MCF 10A (cell line): ENCODE measurements at regions of chr3 and their contacts with region 1.

Region 1: DNA sequence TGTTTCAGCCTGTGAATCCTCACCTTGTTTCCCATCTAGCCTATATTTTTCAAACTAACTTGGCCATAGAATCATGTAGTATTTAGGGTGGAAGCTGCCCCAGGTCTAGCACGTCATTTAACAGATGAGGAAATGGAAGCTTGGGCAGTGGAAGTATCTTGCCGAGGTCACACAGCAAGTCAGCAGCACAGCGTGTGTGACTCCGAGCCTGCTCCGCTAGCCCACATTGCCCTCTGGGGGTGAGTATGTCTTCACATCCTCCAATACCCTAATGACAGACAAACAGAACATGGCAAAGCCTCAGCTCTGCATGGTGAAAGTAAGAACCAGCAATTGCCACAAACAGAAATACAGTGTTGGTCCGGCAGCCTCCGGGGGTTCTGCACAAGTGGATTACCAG is 2.2 kb upstream of the CCR5 start:
- DNase-seq: peak; percentile 57
- H3K4me3 Mint-ChIP-seq: no peak overlapping the region
- H3K27ac Mint-ChIP-seq: no peak overlapping the region
- H3K4me1 Mint-ChIP-seq: no peaks in the 10 kb centered on the region
- H3K27me3 Mint-ChIP-seq: peaks cover 11% of the 10 kb centered on the region
- CTCF ChIP-seq: peak; percentile 28

Region 2: DNA sequence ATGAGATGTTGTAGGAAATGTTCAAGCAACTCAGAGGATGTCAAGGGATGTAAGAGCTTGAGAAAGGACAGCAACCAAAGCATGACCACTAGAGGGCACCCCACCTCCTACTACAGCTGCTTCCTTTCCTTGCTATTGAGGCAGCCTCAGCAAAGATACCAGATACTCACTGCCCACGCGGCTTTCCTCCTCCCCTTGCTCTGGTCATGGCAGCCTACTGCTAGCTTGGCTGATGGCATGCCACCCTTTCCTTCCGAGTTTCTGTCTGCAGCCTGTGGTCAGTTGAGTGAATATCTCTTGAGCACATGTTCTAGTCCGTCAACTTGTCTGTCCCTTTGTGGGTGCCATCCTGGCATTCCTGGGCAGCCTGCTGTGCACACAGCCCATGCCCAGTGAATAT is 429.7 kb before region 1 on chr3:
- CTCF ChIA-PET with region 1: interaction called, 27 read pairs
- POLR2A ChIA-PET with region 1: no interaction called
- intact Hi-C with region 1: loop called (anchors 2 kb)
- DNase-seq: peak; percentile 82
- H3K4me3 Mint-ChIP-seq: no peak overlapping the region
- H3K27ac Mint-ChIP-seq: no peak overlapping the region
- H3K4me1 Mint-ChIP-seq: peaks cover 6% of the 10 kb centered on the region
- H3K27me3 Mint-ChIP-seq: no peaks in the 10 kb centered on the region
- CTCF ChIP-seq: peak; percentile 79

Region 3: DNA sequence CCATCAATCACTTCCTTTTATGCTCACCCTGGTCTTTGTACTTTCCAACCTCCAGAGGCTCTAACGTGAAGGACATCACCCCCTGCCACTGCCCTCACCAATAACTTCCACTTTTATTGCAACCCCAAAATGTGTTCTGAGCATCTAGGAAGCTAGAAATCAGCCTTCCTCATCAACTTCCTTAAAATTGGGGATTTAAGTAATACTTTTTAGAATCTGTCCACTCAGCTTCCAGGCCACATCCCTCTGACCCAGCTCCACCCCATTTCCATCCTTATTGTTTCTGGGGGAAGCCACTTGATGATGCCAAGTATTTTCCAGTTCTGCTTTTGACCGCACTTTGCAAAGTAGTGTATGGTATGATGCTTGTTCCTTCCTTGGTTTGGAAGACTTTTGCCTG is 267.8 kb before region 1 on chr3:
- CTCF ChIA-PET with region 1: interaction called, 11 read pairs
- POLR2A ChIA-PET with region 1: interaction called, 4 read pairs
- intact Hi-C with region 1: no loop called
- DNase-seq: no peak
- H3K4me3 Mint-ChIP-seq: no peak overlapping the region
- H3K27ac Mint-ChIP-seq: peak overlapping the region; percentile 51
- H3K4me1 Mint-ChIP-seq: peaks cover 18% of the 10 kb centered on the region
- H3K27me3 Mint-ChIP-seq: no peaks in the 10 kb centered on the region
- CTCF ChIP-seq: no peak

Region 4: DNA sequence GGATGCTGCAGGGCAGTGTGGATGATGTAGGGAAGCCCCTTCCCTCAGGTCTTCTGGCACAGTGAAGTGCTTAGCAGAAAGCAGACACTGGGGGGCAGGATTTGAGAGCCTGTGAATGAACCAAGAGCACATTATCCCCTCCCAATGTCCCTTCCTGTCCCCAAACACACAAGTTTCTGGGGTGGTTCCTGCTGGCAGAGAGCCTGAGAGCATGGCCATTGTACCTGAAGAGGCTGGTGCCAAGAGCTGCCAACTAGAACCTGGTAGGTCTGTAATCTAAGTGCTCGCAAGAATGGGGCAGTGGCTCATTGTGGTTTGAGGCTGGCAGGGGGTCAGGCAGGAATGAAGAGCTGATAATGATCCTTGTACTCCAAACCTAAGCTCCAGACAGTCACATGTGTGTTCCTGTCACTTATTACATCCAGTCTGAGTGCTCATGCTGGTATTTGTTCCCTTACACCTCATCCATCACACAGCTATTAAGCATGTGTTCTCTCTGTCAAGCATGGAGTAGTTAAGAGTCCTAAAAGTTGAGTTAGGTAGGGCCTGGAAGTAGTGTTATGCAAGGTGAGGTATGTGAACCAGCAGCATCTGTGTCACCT is 153.7 kb before region 1 on chr3:
- CTCF ChIA-PET with region 1: interaction called, 89 read pairs
- POLR2A ChIA-PET with region 1: no interaction called
- intact Hi-C with region 1: loop called (anchors 1 kb)
- DNase-seq: no peak
- H3K4me3 Mint-ChIP-seq: no peak overlapping the region
- H3K27ac Mint-ChIP-seq: no peak overlapping the region
- H3K4me1 Mint-ChIP-seq: no peaks in the 10 kb centered on the region
- H3K27me3 Mint-ChIP-seq: peaks cover 12% of the 10 kb centered on the region
- CTCF ChIP-seq: peak; percentile 44

Region 5: DNA sequence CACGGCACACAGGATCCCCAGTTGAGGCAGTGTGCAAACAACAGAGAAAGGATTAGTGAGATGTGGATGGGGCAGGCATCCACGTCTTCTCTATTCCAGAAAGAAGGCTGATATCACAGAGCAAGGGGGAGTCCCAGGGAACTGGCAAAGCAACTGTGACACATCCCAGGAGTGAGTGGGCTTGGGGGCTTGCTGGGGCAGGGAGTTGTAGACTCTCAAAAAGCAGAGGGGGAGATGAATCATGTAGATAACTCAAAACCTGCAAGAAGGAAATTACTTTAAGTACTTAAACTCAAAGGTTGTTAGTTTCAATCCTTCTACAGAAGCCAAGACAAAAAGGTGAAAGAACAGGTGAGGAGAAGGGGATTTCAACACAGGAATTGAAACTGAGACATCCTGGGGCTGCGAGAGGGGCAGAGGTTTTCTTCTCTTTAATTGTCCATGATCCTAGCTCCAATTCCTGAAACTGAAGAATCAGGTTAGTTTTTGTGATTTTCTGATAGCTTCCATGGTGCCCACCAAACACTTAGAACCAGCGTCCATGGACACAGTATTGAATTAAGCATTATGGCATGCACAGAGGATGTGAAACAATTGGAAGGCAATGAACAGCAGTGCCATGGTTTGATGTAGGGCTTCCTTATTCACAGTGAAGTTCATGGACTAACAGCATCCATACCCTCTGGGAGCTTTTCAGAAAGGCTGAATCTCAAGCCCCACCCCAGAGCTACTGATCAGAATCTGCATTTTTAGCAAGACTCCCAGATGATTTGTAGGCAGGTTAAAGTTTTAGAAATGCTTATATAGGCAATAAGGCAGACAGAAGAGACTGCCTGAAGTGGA is 74.4 kb before region 1 on chr3:
- CTCF ChIA-PET with region 1: interaction called, 5 read pairs
- POLR2A ChIA-PET with region 1: no interaction called
- intact Hi-C with region 1: loop called (anchors 5 kb)
- DNase-seq: no peak
- H3K4me3 Mint-ChIP-seq: no peak overlapping the region
- H3K27ac Mint-ChIP-seq: no peak overlapping the region
- H3K4me1 Mint-ChIP-seq: peaks cover 18% of the 10 kb centered on the region
- H3K27me3 Mint-ChIP-seq: no peaks in the 10 kb centered on the region
- CTCF ChIP-seq: no peak